BJ (cell line): ENCODE measurements at regions of chr14 and their contacts with region 1.

Region 1: GRCh38 chr14:64800000-64800399 is 79.7 kb downstream of the SPTB start:
- DNase-seq: no peak
- H3K4me3 ChIP-seq: no peak overlapping the region
- H3K27me3 ChIP-seq: no peaks in the 10 kb centered on the region
- CTCF ChIP-seq: peak; percentile 69

Region 2: DNA sequence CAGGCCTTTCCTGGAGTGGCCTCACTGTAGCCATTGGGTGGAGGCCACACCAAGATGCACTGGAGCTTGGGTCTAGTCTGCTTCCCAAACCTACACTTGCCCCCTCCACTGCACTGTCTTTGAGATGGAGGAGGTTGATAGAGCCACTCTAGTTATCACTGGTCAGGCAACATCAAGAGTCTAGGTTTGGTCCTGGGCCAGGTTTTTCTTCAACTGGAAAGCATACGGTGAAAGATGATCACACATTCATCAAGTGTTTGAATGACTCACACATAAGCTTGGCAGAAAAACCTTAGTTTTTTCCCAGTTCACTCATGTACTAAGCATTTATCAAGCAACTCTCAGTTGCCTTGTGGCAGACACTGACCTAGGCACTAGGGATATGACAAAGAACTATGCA is 11.3 kb before region 1 on chr14:
- CTCF ChIA-PET with region 1: interaction called, 67 read pairs
- POLR2A ChIA-PET with region 1: no interaction called
- DNase-seq: peak; percentile 87
- H3K4me3 ChIP-seq: no peak overlapping the region
- H3K27me3 ChIP-seq: no peaks in the 10 kb centered on the region
- CTCF ChIP-seq: no peak

Region 3: GRCh38 chr14:64812217-64812811 is 12.3 kb after region 1 on chr14:
- CTCF ChIA-PET with region 1: interaction called, 10 read pairs
- POLR2A ChIA-PET with region 1: interaction called, 5 read pairs
- DNase-seq: no peak
- H3K4me3 ChIP-seq: no peak overlapping the region
- H3K27me3 ChIP-seq: no peaks in the 10 kb centered on the region
- CTCF ChIP-seq: no peak

Region 4: GRCh38 chr14:64914237-64914971 is 114.4 kb after region 1 on chr14 and contains the start of gene CHURC1:
- CTCF ChIA-PET with region 1: interaction called, 12 read pairs
- POLR2A ChIA-PET with region 1: no interaction called
- DNase-seq: peak; percentile 87
- H3K4me3 ChIP-seq: peak within 1 kb of the TSS; percentile 91
- H3K27me3 ChIP-seq: peaks cover 4% of the 10 kb centered on the region
- CTCF ChIP-seq: no peak
- polyA plus RNA-seq, gene CHURC1: 30.6 and 84.4 TPM in 2 replicates